Activated naive CD4-positive, alpha-beta T cell treated with anti-CD3 and anti-CD28 coated beads for 36 hours (primary cell): ENCODE measurements at regions of chr11 and their contacts with region 1.

Region 1: DNA sequence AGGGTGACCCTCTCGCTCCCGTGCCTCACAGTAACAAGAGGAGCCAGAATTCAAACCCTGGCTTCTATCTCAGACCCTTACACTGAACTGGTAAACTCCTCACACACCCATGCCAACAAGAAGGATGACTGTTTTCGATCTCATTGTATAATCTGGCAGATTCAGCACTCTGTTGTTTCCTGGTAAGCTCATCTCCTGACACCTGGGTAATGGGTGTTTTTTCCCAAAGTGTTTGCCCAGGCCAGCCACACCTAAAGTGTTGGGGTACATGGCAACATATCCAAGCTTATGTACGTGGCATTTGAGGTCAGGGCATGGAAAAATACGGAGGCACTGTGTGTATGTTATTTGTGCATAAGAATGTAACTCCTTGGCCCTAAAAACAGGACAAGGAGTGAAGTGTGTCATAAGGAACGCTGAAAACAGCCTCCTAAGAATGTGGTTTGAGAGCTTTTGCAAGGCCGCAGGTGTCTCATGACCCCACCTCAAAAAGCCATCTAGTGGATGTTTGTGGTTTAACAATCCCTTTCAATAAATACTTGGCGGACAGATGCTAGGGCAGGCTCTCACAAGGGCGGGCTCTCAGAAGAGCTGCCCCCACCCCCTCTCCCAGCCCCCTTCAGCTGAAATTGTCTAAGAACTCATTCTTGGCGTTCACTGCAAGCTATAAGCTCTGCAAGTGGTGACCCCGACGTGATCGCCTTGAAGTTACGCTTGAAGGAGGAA is at the start of gene MS4A15:
- DNase-seq: peak; percentile 9
- H3K4me3 Mint-ChIP-seq: no peak within 1 kb of the TSS
- H3K27ac Mint-ChIP-seq: no peak within 1 kb of the TSS
- H3K4me1 Mint-ChIP-seq: no peaks in the 10 kb centered on the region
- H3K27me3 Mint-ChIP-seq: peaks cover 24% of the 10 kb centered on the region
- total RNA-seq, gene MS4A15: not detected

Region 2: GRCh38 chr11:60700689-60701480 is 55.6 kb before region 1 on chr11:
- CTCF ChIA-PET with region 1: no interaction called
- intact Hi-C with region 1: loop called (anchors 2 kb)
- DNase-seq: no peak
- H3K4me3 Mint-ChIP-seq: no peak overlapping the region
- H3K27ac Mint-ChIP-seq: no peak overlapping the region
- H3K4me1 Mint-ChIP-seq: no peaks in the 10 kb centered on the region
- H3K27me3 Mint-ChIP-seq: no peaks in the 10 kb centered on the region